ENCODE measurements at regions of chr13 and their contacts with region 1.

Region 1: GRCh38 chr13:46403851-46404732 is 17.0 kb upstream of the RUBCNL start:
- DNase-seq: peak; percentile 86 to 92 (median 87)
- H3K4me3 ChIP-seq: peak overlapping the region in 2 of 3 experiments; percentile 29 to 72
- H3K4me3 Mint-ChIP-seq: peak overlapping the region; percentile 56 to 79
- H3K27ac ChIP-seq: peak overlapping the region; percentile 76 to 95
- H3K27ac Mint-ChIP-seq: peak overlapping the region; percentile 97 to 98 (median 98)
- H3K4me1 ChIP-seq: peaks cover 61 to 67% of the 10 kb centered on the region in 2 donors
- H3K4me1 Mint-ChIP-seq: peaks cover 65% of the 10 kb centered on the region
- H3K27me3 ChIP-seq: no peaks in the 10 kb centered on the region
- H3K27me3 Mint-ChIP-seq: no peaks in the 10 kb centered on the region
- CTCF ChIP-seq: no peak

Region 2: GRCh38 chr13:46176756-46177155 is 227.3 kb before region 1 on chr13:
- intact Hi-C with region 1: loop called in 1 of 2 experiments (anchors 10 kb)
- DNase-seq: peak; percentile 80 to 90 (median 87)
- H3K4me3 ChIP-seq: peak overlapping the region; percentile 61 to 98 (median 98)
- H3K4me3 Mint-ChIP-seq: peak overlapping the region; percentile 82 to 98
- H3K27ac ChIP-seq: peak overlapping the region; percentile 73 to 95
- H3K27ac Mint-ChIP-seq: peak overlapping the region; percentile 88 to 98 (median 96)
- H3K4me1 ChIP-seq: peaks cover 56 to 79% of the 10 kb centered on the region in 2 donors
- H3K4me1 Mint-ChIP-seq: peaks cover 64% of the 10 kb centered on the region
- H3K27me3 ChIP-seq: no peaks in the 10 kb centered on the region
- H3K27me3 Mint-ChIP-seq: peaks cover 0 to 6% (median 0%) of the 10 kb centered on the region in 3 donors
- CTCF ChIP-seq: no peak

Region 3: DNA sequence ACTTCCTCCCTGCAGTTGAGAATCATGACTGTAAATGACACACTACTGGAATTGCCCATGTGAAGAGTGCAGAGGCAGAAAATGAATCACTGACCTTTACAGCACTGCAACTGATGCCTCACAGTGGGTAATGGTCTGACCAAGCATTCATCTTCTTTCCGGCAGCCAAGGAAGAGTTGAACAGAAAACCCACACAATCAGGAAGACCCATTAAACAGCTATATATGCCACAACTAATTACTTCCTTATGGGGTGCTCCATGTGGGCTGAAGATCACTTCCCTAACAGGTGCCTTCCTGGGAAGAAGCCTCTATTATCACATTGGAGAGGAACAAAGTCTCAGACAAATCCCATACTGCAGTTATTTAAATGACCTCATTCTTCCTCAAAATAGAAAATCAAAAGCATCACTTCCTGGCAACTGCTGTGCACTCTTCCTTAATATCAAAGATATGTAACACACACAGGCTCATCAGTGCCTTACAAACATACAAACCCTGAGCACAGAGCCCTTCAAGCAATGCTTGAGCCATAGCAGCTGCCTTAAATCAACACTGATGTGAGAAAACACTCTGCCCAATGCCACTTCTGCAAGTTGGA is 62.9 kb before region 1 on chr13:
- intact Hi-C with region 1: loop called in 1 of 2 experiments (anchors 5 kb)
- DNase-seq: peak; percentile 94 to 99 (median 96)
- H3K4me3 ChIP-seq: peak overlapping the region in 1 of 3 experiments; percentile 12
- H3K4me3 Mint-ChIP-seq: peak overlapping the region in 1 of 2 donors; percentile 62
- H3K27ac ChIP-seq: peak overlapping the region; percentile 91 to 98
- H3K27ac Mint-ChIP-seq: peak overlapping the region; percentile 97 to 100 (median 99)
- H3K4me1 ChIP-seq: peaks cover 49 to 54% of the 10 kb centered on the region in 2 donors
- H3K4me1 Mint-ChIP-seq: peaks cover 56% of the 10 kb centered on the region
- H3K27me3 ChIP-seq: no peaks in the 10 kb centered on the region
- H3K27me3 Mint-ChIP-seq: peaks cover 0 to 5% (median 0%) of the 10 kb centered on the region in 3 donors
- CTCF ChIP-seq: no peak

Region 4: DNA sequence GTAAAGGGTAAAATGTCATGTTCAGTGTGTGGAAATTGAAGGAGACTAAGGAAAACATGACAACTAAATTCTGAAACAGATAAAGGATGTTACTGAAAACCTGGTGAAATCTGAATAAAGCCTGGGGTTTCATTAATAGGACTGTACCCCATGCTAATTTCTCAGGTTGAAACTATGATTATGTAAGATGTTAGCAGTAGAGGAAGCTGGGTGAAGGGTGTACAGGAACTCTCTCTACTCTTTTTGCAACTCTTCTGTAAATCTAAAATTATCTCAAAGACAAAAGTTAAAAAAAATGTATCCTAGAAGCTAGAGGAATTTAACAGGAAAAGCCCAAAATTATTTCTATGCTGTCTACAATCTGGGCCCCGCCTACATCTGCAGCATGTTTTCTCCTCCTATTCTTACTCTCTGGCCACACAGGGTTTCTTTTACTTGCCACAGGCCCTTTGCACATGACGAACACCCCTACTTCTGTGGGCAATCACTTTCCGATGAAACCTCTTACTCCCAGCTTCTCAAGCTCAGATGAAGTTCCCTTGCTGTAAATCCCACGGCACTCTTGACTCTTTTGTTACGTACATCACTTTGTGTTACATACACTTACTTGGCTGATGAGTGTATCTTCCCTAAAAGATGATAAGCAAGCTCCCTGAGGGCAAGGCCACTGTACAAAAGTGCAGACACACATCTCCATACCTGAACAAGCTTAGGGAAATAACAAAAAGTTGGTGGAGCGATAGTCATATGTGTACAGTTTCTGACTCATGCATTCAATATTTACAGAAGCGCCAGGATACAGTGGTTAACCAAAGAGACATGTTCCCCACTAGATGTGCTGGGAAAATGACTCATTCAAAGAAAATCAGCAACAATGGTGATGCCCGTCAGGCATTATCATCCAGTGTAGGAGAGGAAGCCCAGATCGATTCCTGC is 49.7 kb before region 1 on chr13:
- intact Hi-C with region 1: loop called in 1 of 2 experiments (anchors 10 kb)
- DNase-seq: peak; percentile 89 to 96 (median 96)
- H3K4me3 ChIP-seq: no peak overlapping the region
- H3K4me3 Mint-ChIP-seq: peak overlapping the region; percentile 13 to 80
- H3K27ac ChIP-seq: peak overlapping the region; percentile 78 to 97
- H3K27ac Mint-ChIP-seq: peak overlapping the region; percentile 98 to 100 (median 99)
- H3K4me1 ChIP-seq: peaks cover 44 to 47% of the 10 kb centered on the region in 2 donors
- H3K4me1 Mint-ChIP-seq: peaks cover 43% of the 10 kb centered on the region
- H3K27me3 ChIP-seq: no peaks in the 10 kb centered on the region
- H3K27me3 Mint-ChIP-seq: no peaks in the 10 kb centered on the region
- CTCF ChIP-seq: no peak

Region 5: DNA sequence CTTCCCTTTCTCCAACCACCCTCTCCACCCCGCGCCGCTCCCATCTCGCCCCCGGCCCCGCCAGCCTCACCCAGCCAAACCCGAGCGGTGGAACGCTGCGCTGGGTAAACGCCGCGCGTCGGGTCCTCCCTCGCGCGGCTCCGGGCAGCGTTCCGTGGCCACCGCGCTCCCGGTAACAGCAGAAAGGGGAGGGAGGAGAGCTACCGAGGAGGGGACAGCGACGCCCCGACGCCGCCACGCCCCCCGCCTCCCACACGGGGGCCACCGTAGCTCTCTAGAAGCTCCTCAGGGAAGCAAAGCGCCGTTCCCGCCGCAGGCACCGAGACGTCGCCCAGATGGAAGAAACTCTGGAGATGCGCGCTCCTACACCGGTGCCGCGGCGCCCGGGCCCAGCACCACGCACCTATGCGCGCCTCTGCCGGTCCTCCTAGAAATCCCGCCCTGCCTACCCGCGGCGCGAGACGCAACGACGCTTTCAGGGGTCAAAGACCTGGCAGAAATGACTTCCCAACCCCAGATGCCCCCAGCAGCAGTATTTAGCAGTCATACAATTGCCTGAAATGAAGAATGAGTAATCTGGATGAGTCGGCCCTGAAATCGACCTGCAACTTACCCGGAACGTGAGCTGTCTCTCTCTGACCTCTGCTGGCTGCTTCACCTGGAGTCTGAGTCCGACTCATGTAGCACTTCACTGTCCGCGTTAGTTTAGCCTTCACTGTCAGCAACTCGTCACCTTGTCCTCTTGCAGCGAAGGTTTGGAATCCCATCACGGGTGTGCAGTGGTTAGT is 16.8 kb before region 1 on chr13 and contains the start of gene RUBCNL:
- intact Hi-C with region 1: loop called in 1 of 2 experiments (anchors 2 kb)
- DNase-seq: peak; percentile 61 to 80 (median 70)
- H3K4me3 ChIP-seq: peak within 1 kb of the TSS; percentile 45 to 88 (median 65)
- H3K4me3 Mint-ChIP-seq: peak within 1 kb of the TSS; percentile 92 to 96
- H3K27ac ChIP-seq: peak within 1 kb of the TSS; percentile 40 to 71
- H3K27ac Mint-ChIP-seq: peak within 1 kb of the TSS in 6 of 7 donors; percentile 74 to 90 (median 84)
- H3K4me1 ChIP-seq: peaks cover 76 to 83% of the 10 kb centered on the region in 2 donors
- H3K4me1 Mint-ChIP-seq: peaks cover 77% of the 10 kb centered on the region
- H3K27me3 ChIP-seq: peaks cover 0 to 9% of the 10 kb centered on the region in 2 donors
- H3K27me3 Mint-ChIP-seq: peaks cover 8 to 30% (median 24%) of the 10 kb centered on the region in 3 donors
- CTCF ChIP-seq: peak; percentile 18
- polyA plus RNA-seq, gene RUBCNL: 1.5 to 14.5 (median 2.8) TPM

Region 6: DNA sequence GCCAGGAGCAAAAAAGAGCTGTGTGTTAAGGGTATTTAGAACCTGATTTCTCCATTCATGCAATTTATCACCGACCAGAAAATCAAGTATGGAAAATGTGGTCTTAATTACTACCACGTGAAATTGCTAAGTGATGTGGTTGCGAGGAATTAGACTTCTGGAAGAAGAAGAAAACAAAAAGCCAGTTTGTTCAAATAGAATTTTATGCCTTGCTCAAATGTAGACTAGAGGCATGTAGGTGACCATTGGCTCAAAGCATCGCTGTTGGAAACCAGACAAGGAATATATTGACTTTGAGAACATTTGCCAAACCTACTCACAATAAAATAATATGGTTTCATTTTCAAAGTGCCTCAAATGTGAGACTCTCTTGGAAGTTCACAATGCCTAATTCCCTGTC is 91.6 kb after region 1 on chr13:
- intact Hi-C with region 1: no loop called
- DNase-seq: no peak
- H3K4me3 ChIP-seq: no peak overlapping the region
- H3K4me3 Mint-ChIP-seq: no peak overlapping the region
- H3K27ac ChIP-seq: no peak overlapping the region
- H3K27ac Mint-ChIP-seq: no peak overlapping the region
- H3K4me1 ChIP-seq: no peaks in the 10 kb centered on the region
- H3K4me1 Mint-ChIP-seq: no peaks in the 10 kb centered on the region
- H3K27me3 ChIP-seq: no peaks in the 10 kb centered on the region
- H3K27me3 Mint-ChIP-seq: peaks cover 5 to 7% (median 6%) of the 10 kb centered on the region in 3 donors
- CTCF ChIP-seq: no peak